ENCODE measurements at regions of chr4 and their contacts with region 1.

Region 1: DNA sequence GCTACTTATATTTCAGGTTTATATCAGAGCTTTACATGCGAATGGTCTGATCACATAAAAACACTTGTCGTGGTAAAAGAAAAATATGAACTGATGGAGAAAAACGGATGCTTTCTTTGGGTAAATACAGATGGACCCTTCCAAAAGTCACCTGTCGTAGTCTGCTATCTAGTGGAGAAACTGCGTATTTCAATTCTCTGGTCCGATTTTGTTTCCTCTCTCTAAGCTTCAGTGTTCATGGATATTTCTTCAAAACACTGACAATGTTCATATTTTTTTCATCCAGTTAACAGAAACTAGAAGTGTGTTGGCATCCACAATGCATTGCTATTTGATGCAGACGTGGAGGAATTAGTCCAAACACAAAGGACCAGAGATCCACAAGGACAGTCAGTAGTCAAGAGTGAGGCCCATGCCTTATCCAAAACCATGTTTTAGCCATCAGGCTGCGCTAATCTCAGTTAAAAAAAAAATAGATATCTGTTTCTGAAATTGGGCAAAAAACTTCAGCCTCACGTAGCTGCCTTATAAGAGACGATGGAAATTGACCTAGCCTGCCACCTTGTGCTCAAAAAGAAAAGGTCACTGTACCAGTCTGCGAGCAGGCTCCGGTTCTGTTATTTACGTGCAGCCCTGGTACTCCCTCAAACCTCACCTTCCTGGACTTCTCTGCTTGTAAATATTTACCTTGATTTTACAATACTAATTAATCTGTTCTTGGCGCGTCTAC is 16.0 kb downstream of the MEPE start:
- DNase-seq: no peak

Region 2: DNA sequence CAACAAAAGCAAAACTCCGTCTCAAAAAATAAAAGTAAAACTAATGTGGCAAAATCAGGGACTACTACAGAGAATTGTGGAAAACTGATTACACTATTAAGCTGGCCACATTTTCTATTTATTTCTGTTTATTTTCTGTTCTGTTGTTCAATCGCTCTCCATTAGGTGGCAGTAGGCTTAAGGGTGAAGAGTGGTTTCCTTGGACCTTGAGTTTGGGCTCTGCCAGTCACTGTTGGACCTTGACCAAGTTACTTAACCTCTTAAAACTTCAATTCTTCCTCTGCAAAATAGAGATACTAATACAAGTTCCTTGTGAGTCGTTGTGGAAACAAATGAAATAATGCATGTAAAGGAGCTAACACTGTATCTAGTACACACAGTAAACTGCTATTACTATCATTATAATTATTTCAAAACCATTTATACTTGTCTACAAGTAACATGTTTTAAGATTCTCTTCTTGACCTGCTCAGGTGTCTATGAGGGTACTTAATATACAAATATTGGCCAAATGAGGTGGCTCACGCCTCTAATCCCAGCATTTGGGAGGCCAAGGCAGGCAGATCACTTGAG is 473.0 kb before region 1 on chr4:
- intact Hi-C with region 1: loop called (anchors 5 kb)
- DNase-seq: no peak

Region 3: GRCh38 chr4:87543835-87544461 is 304.8 kb before region 1 on chr4:
- intact Hi-C with region 1: loop called (anchors 5 kb)
- DNase-seq: no peak

Region 4: DNA sequence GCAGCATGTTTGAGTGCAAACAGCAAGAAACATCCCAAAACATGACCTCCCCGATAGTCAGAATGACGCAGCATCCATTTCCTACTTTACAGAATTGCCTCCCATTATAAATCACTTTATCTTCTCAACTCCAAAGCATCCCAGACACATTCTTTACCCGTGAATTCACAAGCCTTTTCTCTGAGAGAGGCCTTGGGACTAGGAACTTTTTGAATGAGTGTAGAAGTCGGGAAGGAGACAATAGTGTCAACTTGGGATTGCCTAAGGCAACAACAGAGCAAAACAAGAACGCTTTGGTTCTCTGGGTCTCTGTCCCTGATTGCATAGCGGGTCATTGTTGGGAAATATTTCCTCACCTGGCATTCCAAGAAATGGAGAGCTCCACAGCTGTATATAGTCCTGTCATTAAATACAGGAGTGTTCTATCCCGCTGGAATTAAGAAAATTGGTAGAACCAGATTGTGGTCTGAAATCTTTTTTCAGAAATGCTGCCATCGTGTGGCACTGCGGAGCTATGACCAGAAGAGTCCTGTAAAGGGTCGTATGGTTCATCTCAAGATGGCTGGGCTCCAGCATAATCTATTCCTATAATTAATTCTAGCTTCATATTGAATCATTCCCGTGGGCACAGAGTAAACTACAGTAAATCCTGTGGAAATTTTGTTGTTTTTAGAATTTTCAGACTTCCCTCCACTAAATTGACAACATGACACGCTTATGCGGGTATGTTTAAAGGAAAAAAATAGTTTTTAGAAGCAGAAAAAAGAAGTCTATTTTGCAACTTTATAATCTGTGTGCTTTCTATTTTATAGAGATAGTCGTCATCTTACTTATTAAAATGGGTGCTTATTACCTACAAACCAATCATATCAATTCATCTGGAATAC is 124.7 kb after region 1 on chr4:
- intact Hi-C with region 1: loop called (anchors 1 kb)
- DNase-seq: no peak